Gastrocnemius medialis (tissue), 4 donors: ENCODE measurements at regions of chr5 and their contacts with region 1.

Region 1: GRCh38 chr5:37668524-37669047 is 171.3 kb downstream of the GDNF start:
- DNase-seq: peak; percentile 93 to 94
- ATAC-seq: peak; percentile 95
- H3K4me3 ChIP-seq: no peak overlapping the region
- H3K27ac ChIP-seq: peak overlapping the region; percentile 78 to 89 (median 84)
- H3K4me1 ChIP-seq: peaks cover 52 to 60% of the 10 kb centered on the region in 2 donors
- H3K27me3 ChIP-seq: no peaks in the 10 kb centered on the region
- CTCF ChIP-seq: no peak
- POLR2A ChIP-seq: no peak

Region 2: DNA sequence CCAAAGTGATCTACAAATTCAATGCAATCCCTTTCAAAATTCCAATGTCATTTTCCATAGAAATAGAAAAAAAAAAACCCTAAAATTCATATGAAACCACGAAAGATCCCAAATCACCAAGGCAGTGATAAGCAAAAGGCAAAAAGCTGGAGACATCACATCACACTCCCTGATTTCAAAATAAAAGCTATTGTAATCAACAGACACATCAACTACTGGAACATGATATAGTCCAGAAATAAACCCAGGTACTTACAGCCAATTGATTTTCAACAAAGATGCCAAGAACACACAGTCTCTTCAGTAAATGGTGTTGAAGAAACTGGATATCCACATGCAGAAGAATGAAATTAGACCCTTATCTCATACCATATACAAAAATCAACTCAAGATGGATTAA is 65.5 kb before region 1 on chr5:
- in situ Hi-C with region 1: no loop called
- intact Hi-C with region 1: loop called (anchors 1 kb)
- DNase-seq: no peak
- ATAC-seq: peak; percentile 95 to 97
- H3K4me3 ChIP-seq: peak overlapping the region in 3 of 4 donors; percentile 8 to 25 (median 14)
- H3K27ac ChIP-seq: peak overlapping the region; percentile 76 to 89 (median 78)
- H3K4me1 ChIP-seq: peaks cover 22 to 23% of the 10 kb centered on the region in 2 donors
- H3K27me3 ChIP-seq: no peaks in the 10 kb centered on the region
- CTCF ChIP-seq: no peak
- POLR2A ChIP-seq: no peak

Region 3: DNA sequence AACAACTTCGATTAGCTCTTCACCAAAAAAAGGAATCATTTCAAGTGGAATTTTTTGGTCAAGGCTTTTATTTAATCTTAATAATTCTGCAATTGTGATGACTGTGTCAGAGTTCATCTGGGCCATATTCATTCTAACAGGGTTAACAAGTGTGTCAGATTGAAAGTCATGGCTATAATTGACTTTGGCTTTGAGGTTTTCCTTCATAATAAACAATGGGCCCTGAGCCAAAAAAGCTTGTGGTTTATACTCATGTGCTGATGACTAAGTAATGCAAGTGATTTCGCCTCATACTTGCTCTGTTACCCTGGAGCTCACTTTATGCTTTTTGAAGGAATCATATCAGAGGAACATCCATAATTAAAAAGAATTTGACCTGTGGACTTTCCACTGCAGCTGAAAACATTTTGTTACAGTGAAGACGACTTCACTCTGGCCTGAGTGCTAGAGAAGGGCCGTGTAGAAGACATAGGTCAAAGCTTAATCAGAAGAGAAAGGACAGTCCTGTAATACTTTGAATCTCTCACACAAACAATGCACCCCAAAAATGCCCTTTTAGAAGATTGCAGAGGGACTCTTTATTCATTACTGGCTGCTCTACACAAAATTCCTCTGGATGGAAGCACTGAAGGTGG is 69.6 kb after region 1 on chr5:
- in situ Hi-C with region 1: no loop called
- intact Hi-C with region 1: no loop called
- DNase-seq: peak in 1 of 2 donors; percentile 38
- ATAC-seq: peak; percentile 23 to 68
- H3K4me3 ChIP-seq: no peak overlapping the region
- H3K27ac ChIP-seq: peak overlapping the region; percentile 35 to 65 (median 56)
- H3K4me1 ChIP-seq: peaks cover 29 to 40% of the 10 kb centered on the region in 2 donors
- H3K27me3 ChIP-seq: no peaks in the 10 kb centered on the region
- CTCF ChIP-seq: no peak
- POLR2A ChIP-seq: peak in 1 of 2 donors; percentile 17